CD4-positive, alpha-beta T cell (primary cell): ENCODE measurements at regions of chr6 and their contacts with region 1.

Region 1: GRCh38 chr6:30500421-30501355 is 11.4 kb downstream of the HLA-E start:
- DNase-seq: peak in 2 of 14 experiments; percentile 37 to 45
- ATAC-seq: peak; percentile 55
- H3K4me3 ChIP-seq: peak overlapping the region; percentile 35
- H3K4me3 Mint-ChIP-seq: peak overlapping the region; percentile 57
- H3K27ac ChIP-seq: peak overlapping the region in 1 of 2 donors; percentile 10
- H3K27ac Mint-ChIP-seq: peak overlapping the region; percentile 75
- H3K4me1 ChIP-seq: peaks cover 29% of the 10 kb centered on the region
- H3K4me1 Mint-ChIP-seq: peaks cover 40% of the 10 kb centered on the region
- H3K27me3 ChIP-seq: no peaks in the 10 kb centered on the region
- H3K27me3 Mint-ChIP-seq: no peaks in the 10 kb centered on the region
- CTCF ChIP-seq: no peak

Region 2: GRCh38 chr6:30515932-30516753 is 15.5 kb after region 1 on chr6:
- CTCF ChIA-PET with region 1: interaction called, 7 read pairs
- POLR2A ChIA-PET with region 1: interaction called, 226 read pairs
- intact Hi-C with region 1: no loop called
- DNase-seq: peak; percentile 78 to 98 (median 87)
- ATAC-seq: peak; percentile 84
- H3K4me3 ChIP-seq: peak overlapping the region; percentile 55
- H3K4me3 Mint-ChIP-seq: peak overlapping the region; percentile 89
- H3K27ac ChIP-seq: peak overlapping the region; percentile 92 to 98
- H3K27ac Mint-ChIP-seq: peak overlapping the region; percentile 99
- H3K4me1 ChIP-seq: peaks cover 83% of the 10 kb centered on the region
- H3K4me1 Mint-ChIP-seq: peaks cover 69% of the 10 kb centered on the region
- H3K27me3 ChIP-seq: no peaks in the 10 kb centered on the region
- H3K27me3 Mint-ChIP-seq: no peaks in the 10 kb centered on the region
- CTCF ChIP-seq: no peak